ENCODE measurements at regions of chr11 and their contacts with region 1.

Region 1: DNA sequence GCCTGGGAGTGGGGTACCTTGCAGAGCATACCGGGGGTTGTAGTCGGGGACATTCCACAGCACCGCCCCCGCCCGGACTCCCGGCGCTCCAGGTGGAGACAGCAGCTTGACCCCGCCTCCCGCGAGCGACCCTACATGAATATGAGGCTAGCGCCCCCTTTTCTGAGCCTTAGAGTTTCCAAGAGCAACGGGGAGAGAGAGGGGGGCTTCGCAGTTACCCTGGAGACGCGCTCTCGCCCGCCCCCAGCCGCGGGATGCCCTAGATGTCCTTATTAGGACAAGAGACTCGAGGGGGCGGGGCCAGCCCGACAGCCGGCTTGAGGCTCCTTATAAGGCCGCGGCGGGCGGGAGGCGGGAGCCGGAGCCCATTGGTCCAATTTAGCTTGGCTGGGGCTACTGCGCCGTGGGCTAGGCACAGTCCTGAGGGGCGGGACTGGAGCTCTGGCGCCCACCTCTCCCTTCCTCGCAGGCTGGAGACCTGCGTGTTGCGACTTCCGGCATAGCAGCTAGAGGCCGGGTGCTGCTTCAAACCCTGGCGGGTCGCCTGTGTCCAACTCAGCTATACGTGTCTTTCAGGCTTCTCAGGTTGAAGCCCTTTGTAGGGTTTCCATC is 927 bp upstream of the MUS81 start:
- DNase-seq: peak; percentile 84 to 97 (median 90)
- ATAC-seq: peak; percentile 71
- H3K4me3 ChIP-seq: peak overlapping the region; percentile 65
- H3K4me3 Mint-ChIP-seq: peak overlapping the region; percentile 92 to 100 (median 97)
- H3K27ac ChIP-seq: peak overlapping the region; percentile 88
- H3K27ac Mint-ChIP-seq: peak overlapping the region; percentile 88 to 99 (median 97)
- H3K4me1 ChIP-seq: peaks cover 39 to 41% of the 10 kb centered on the region in 2 donors
- H3K4me1 Mint-ChIP-seq: peaks cover 35 to 63% (median 50%) of the 10 kb centered on the region in 7 donors
- H3K27me3 ChIP-seq: no peaks in the 10 kb centered on the region
- H3K27me3 Mint-ChIP-seq: no peaks in the 10 kb centered on the region

Region 2: DNA sequence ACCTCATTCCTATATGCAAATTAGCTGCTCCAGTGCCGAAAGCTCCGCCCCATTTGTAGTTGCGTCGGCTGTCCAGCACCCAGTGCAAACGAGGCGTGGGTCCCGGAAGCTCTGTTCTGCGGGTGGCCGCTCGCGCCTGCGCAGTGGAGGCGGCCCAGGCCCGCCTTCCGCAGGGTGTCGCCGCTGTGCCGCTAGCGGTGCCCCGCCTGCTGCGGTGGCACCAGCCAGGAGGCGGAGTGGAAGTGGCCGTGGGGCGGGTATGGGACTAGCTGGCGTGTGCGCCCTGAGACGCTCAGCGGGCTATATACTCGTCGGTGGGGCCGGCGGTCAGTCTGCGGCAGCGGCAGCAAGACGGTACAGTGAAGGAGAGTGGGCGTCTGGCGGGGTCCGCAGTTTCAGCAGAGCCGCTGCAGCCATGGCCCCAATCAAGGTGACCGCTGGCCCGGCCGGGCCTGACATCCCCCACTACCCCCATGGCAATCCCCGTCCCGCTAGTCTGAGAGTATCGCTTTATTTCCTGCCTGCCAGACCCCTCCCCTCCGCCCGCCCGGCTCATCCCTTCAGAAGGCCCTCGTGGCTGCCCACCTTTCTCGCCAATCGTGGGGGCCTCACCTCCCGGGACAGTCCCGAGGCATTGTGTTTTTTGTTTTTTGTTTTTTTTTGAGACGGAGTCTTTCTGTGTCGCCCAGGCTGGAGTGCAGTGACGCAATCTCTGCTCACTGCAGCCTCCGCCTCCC is 1541.2 kb before region 1 on chr11 and contains the start of gene PRDX5:
- CTCF ChIA-PET with region 1: no interaction called
- POLR2A ChIA-PET with region 1: no interaction called
- intact Hi-C with region 1: loop called in 1 of 2 experiments (anchors 5 kb)
- DNase-seq: peak; percentile 93 to 97 (median 96)
- ATAC-seq: peak; percentile 87
- H3K4me3 ChIP-seq: peak within 1 kb of the TSS; percentile 60
- H3K4me3 Mint-ChIP-seq: peak within 1 kb of the TSS; percentile 85 to 99 (median 96)
- H3K27ac ChIP-seq: peak within 1 kb of the TSS; percentile 92
- H3K27ac Mint-ChIP-seq: peak within 1 kb of the TSS; percentile 97 to 100 (median 100)
- H3K4me1 ChIP-seq: peaks cover 7 to 10% of the 10 kb centered on the region in 2 donors
- H3K4me1 Mint-ChIP-seq: peaks cover 20 to 40% (median 28%) of the 10 kb centered on the region in 7 donors
- H3K27me3 ChIP-seq: no peaks in the 10 kb centered on the region
- H3K27me3 Mint-ChIP-seq: no peaks in the 10 kb centered on the region
- total RNA-seq, gene PRDX5: 41.4 to 99.2 (median 55.2) TPM

Region 3: GRCh38 chr11:64619811-64620380 is 1239.4 kb before region 1 on chr11:
- CTCF ChIA-PET with region 1: no interaction called
- POLR2A ChIA-PET with region 1: no interaction called
- intact Hi-C with region 1: no loop called
- DNase-seq: no peak
- ATAC-seq: no peak
- H3K4me3 ChIP-seq: no peak overlapping the region
- H3K4me3 Mint-ChIP-seq: no peak overlapping the region
- H3K27ac ChIP-seq: no peak overlapping the region
- H3K27ac Mint-ChIP-seq: peak overlapping the region in 1 of 9 donors; percentile 80
- H3K4me1 ChIP-seq: no peaks in the 10 kb centered on the region
- H3K4me1 Mint-ChIP-seq: peaks cover 0 to 10% (median 5%) of the 10 kb centered on the region in 7 donors
- H3K27me3 ChIP-seq: no peaks in the 10 kb centered on the region
- H3K27me3 Mint-ChIP-seq: no peaks in the 10 kb centered on the region

Region 4: GRCh38 chr11:65652511-65653231 is 206.6 kb before region 1 on chr11:
- CTCF ChIA-PET with region 1: no interaction called
- POLR2A ChIA-PET with region 1: interaction called, 3 read pairs
- intact Hi-C with region 1: loop called in 1 of 2 experiments (anchors 2 kb)
- DNase-seq: peak; percentile 91 to 99 (median 95)
- ATAC-seq: peak; percentile 92
- H3K4me3 ChIP-seq: peak overlapping the region; percentile 58
- H3K4me3 Mint-ChIP-seq: peak overlapping the region; percentile 70 to 95 (median 90)
- H3K27ac ChIP-seq: peak overlapping the region; percentile 98
- H3K27ac Mint-ChIP-seq: peak overlapping the region; percentile 90 to 99 (median 98)
- H3K4me1 ChIP-seq: peaks cover 25% of the 10 kb centered on the region in 2 donors
- H3K4me1 Mint-ChIP-seq: peaks cover 36 to 59% (median 51%) of the 10 kb centered on the region in 7 donors
- H3K27me3 ChIP-seq: no peaks in the 10 kb centered on the region
- H3K27me3 Mint-ChIP-seq: no peaks in the 10 kb centered on the region

Region 5: GRCh38 chr11:65817835-65818742 is 41.2 kb before region 1 on chr11:
- CTCF ChIA-PET with region 1: no interaction called
- POLR2A ChIA-PET with region 1: no interaction called
- intact Hi-C with region 1: loop called in 1 of 2 experiments (anchors 1 kb)
- DNase-seq: peak; percentile 79 to 98 (median 89)
- ATAC-seq: peak; percentile 98
- H3K4me3 ChIP-seq: peak overlapping the region; percentile 72
- H3K4me3 Mint-ChIP-seq: peak overlapping the region; percentile 74 to 90 (median 82)
- H3K27ac ChIP-seq: peak overlapping the region; percentile 75
- H3K27ac Mint-ChIP-seq: peak overlapping the region; percentile 56 to 90 (median 76)
- H3K4me1 ChIP-seq: peaks cover 7% of the 10 kb centered on the region in 2 donors
- H3K4me1 Mint-ChIP-seq: peaks cover 6 to 21% (median 17%) of the 10 kb centered on the region in 7 donors
- H3K27me3 ChIP-seq: no peaks in the 10 kb centered on the region
- H3K27me3 Mint-ChIP-seq: peaks cover 0 to 4% (median 0%) of the 10 kb centered on the region in 5 donors

Region 6: GRCh38 chr11:65900125-65900898 is 41.0 kb after region 1 on chr11 and contains the start of gene FOSL1:
- CTCF ChIA-PET with region 1: no interaction called
- POLR2A ChIA-PET with region 1: interaction called, 4 read pairs
- intact Hi-C with region 1: loop called in 1 of 2 experiments (anchors 1 kb)
- DNase-seq: peak; percentile 83 to 97 (median 89)
- ATAC-seq: peak; percentile 95
- H3K4me3 ChIP-seq: peak within 1 kb of the TSS; percentile 51
- H3K4me3 Mint-ChIP-seq: peak within 1 kb of the TSS; percentile 64 to 81 (median 74)
- H3K27ac ChIP-seq: peak within 1 kb of the TSS; percentile 47
- H3K27ac Mint-ChIP-seq: peak within 1 kb of the TSS in 6 of 9 donors; percentile 43 to 88 (median 80)
- H3K4me1 ChIP-seq: peaks cover 17 to 19% of the 10 kb centered on the region in 2 donors
- H3K4me1 Mint-ChIP-seq: peaks cover 6 to 42% (median 10%) of the 10 kb centered on the region in 7 donors
- H3K27me3 ChIP-seq: peaks cover 0 to 6% of the 10 kb centered on the region in 2 donors
- H3K27me3 Mint-ChIP-seq: peaks cover 0 to 11% (median 3%) of the 10 kb centered on the region in 5 donors
- total RNA-seq, gene FOSL1: 2.8 to 25.7 (median 4.0) TPM in 3 of 5 experiments, not detected in the others

Region 7: GRCh38 chr11:66001942-66002647 is 142.8 kb after region 1 on chr11 and contains the starts of genes BANF1 and EIF1AD:
- CTCF ChIA-PET with region 1: interaction called, 4 read pairs
- POLR2A ChIA-PET with region 1: interaction called, 54 read pairs
- intact Hi-C with region 1: loop called (anchors 1 kb)
- DNase-seq: peak; percentile 75 to 96 (median 94)
- ATAC-seq: peak; percentile 92
- H3K4me3 ChIP-seq: peak within 1 kb of the TSS; percentile 100
- H3K4me3 Mint-ChIP-seq: peak within 1 kb of the TSS; percentile 97 to 100 (median 99)
- H3K27ac ChIP-seq: peak within 1 kb of the TSS; percentile 92
- H3K27ac Mint-ChIP-seq: peak within 1 kb of the TSS; percentile 96 to 100 (median 98)
- H3K4me1 ChIP-seq: peaks cover 8 to 14% of the 10 kb centered on the region in 2 donors
- H3K4me1 Mint-ChIP-seq: peaks cover 21 to 58% (median 52%) of the 10 kb centered on the region in 7 donors
- H3K27me3 ChIP-seq: no peaks in the 10 kb centered on the region
- H3K27me3 Mint-ChIP-seq: no peaks in the 10 kb centered on the region
- total RNA-seq, gene BANF1: 54.5 to 234 (median 99.4) TPM
- total RNA-seq, gene EIF1AD: 49.9 to 114 (median 66.7) TPM